PC-3 (cell line): ENCODE measurements at regions of chr14 and their contacts with region 1.

Region 1: DNA sequence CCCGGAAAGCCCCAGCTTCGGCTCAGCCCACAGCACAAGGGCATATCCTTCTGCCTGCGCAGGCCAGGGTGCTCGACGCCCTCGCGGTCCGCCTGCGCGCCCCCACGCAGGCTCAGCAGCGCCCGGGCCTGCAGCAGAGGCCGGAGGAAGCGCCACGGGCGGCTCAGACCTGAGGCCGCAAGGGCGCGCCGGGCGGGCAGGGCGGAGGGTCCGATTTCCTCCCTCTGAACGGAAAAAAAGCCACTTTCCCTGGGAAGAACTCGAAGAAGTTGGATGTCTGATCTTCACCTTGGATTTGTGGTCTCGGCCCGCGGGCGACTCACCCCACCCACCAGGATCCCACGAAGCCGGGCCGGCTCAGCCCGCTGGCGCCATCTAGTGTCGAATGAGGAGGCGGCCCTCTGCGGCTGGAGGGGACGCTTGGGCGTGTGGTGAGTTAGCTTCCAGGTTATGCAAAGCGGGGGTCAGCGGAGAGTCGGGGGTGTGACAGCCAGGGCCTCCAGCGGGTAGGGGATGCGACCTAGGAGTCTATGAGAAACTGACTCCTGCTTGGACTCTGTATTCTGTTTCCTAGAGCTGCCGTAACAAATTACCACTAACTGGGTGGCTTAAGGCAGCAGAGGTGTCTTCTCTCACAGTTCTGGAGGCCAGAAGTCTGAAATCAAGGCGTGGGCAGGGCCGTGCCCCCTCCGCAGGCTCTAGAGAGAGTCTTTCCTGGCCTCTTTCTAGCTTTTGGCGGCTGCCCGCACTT is 40.0 kb upstream of the SRSF5 start:
- DNase-seq: peak; percentile 82
- ATAC-seq: peak; percentile 96
- H3K4me3 ChIP-seq: peak overlapping the region; percentile 65
- H3K27ac ChIP-seq: no peak overlapping the region
- H3K4me1 ChIP-seq: 0 out of 2 replicates have a peak, but pooled peaks cover 4% of the 10 kb centered on the region
- H3K27me3 ChIP-seq: no peaks in the 10 kb centered on the region
- CTCF ChIP-seq: peak; percentile 99

Region 2: DNA sequence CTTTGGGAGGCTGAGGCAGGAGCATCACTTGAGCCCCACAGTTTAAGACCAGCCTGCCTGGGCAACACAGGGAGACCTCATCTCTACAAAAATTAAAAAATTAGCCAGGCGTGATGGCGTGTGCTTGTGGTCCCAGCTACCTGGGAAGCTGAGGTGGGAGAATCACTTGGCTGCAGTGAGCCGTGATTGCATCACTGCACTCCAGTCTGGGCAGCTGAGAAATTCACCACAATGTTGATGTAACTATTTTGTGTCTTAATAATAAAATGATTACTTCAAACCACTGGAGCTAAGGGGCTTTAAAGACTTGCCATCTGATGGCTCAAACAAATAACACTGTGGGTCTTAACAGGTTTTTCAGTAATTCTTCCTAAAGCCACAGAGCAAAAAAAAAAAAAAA is 339.6 kb before region 1 on chr14:
- CTCF ChIA-PET with region 1: no interaction called
- POLR2A ChIA-PET with region 1: no interaction called
- intact Hi-C with region 1: no loop called
- DNase-seq: no peak
- ATAC-seq: no peak
- H3K4me3 ChIP-seq: no peak overlapping the region
- H3K27ac ChIP-seq: no peak overlapping the region
- H3K4me1 ChIP-seq: no peaks in the 10 kb centered on the region
- H3K27me3 ChIP-seq: no peaks in the 10 kb centered on the region
- CTCF ChIP-seq: no peak

Region 3: DNA sequence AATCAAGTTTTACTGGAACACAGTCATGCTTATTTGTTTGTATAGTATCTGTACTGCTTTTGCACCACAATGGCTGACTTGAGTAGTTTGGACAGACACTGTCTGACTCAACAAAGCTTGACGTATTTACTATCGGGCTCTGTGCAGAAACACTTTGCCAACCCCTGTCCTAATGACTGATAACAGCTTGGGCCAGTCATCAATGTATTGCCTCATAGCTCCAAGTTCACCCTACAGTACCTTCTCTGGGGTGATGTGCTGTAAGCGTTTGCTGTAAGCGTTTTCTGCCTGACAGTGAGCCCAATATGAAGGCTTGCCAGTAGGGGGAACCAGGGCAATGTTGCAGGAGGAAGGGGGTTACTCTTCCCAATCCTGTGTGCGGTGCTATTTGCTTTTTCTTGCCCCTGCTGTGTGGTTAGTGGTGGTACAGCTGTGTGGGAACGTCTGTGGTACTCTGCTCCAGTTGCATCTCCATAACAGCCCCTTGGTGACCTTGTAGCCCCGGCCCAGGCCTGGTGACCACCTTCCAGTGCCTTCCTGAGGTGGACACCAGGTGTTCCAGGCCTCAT is 146.8 kb before region 1 on chr14:
- CTCF ChIA-PET with region 1: interaction called, 15 read pairs
- POLR2A ChIA-PET with region 1: interaction called, 14 read pairs
- intact Hi-C with region 1: loop called (anchors 1 kb)
- DNase-seq: peak; percentile 78
- ATAC-seq: peak; percentile 70
- H3K4me3 ChIP-seq: no peak overlapping the region
- H3K27ac ChIP-seq: no peak overlapping the region
- H3K4me1 ChIP-seq: peaks cover 11% of the 10 kb centered on the region
- H3K27me3 ChIP-seq: peaks cover 10% of the 10 kb centered on the region; the same call in 1 of the 2 replicates
- CTCF ChIP-seq: peak; percentile 74

Region 4: DNA sequence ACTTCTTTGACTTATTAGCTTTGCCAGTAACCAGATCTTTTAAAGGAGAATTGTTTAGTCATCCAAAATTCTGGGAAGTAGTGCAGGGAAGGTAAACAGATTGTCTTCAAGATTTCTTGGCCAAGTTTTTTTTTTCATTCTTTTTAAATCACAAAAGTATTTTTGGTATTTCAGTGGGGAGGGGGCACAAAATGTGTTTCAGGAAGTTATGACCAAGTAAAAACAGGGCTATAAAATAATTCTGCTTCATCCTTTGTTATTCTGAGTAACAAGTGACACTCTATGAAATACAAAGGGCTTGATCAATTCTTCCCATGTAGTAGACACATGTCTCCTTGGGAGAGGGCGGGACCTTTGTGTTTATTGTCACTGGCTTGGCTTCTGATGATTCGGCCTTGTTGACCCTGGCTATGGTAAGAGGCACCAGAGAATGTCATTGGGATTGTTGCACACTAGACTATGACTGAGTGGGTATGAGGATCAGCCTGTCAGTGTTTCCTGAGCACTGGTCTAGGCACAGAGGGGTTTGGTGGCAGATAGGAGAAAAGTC is 60.2 kb before region 1 on chr14:
- CTCF ChIA-PET with region 1: no interaction called
- POLR2A ChIA-PET with region 1: no interaction called
- intact Hi-C with region 1: loop called (anchors 2 kb)
- DNase-seq: peak; percentile 80
- ATAC-seq: peak; percentile 76
- H3K4me3 ChIP-seq: no peak overlapping the region
- H3K27ac ChIP-seq: peak overlapping the region; percentile 49
- H3K4me1 ChIP-seq: peaks cover 32% of the 10 kb centered on the region
- H3K27me3 ChIP-seq: no peaks in the 10 kb centered on the region
- CTCF ChIP-seq: no peak

Region 5: GRCh38 chr14:69818757-69819191 is 91.8 kb after region 1 on chr14:
- CTCF ChIA-PET with region 1: interaction called, 9 read pairs
- POLR2A ChIA-PET with region 1: no interaction called
- intact Hi-C with region 1: loop called (anchors 1 kb)
- DNase-seq: peak; percentile 95
- ATAC-seq: peak; percentile 92
- H3K4me3 ChIP-seq: no peak overlapping the region
- H3K27ac ChIP-seq: no peak overlapping the region
- H3K4me1 ChIP-seq: no peaks in the 10 kb centered on the region
- H3K27me3 ChIP-seq: peaks cover 83% of the 10 kb centered on the region
- CTCF ChIP-seq: peak; percentile 97

Region 6: GRCh38 chr14:69945912-69946311 is 219.0 kb after region 1 on chr14:
- CTCF ChIA-PET with region 1: no interaction called
- POLR2A ChIA-PET with region 1: no interaction called
- intact Hi-C with region 1: no loop called
- DNase-seq: no peak
- ATAC-seq: no peak
- H3K4me3 ChIP-seq: no peak overlapping the region
- H3K27ac ChIP-seq: no peak overlapping the region
- H3K4me1 ChIP-seq: no peaks in the 10 kb centered on the region
- H3K27me3 ChIP-seq: peaks cover 93% of the 10 kb centered on the region
- CTCF ChIP-seq: no peak